Heart right ventricle (tissue), 16 donors: ENCODE measurements at regions of chr17 and their contacts with region 1.

Region 1: GRCh38 chr17:79915850-79916430 is 76.7 kb upstream of the CBX4 start:
- DNase-seq: peak; percentile 33 to 52
- ATAC-seq: peak in 5 of 8 donors; percentile 24 to 54 (median 39)
- H3K4me3 ChIP-seq: no peak overlapping the region
- H3K27ac ChIP-seq: no peak overlapping the region
- H3K4me1 ChIP-seq: peaks cover 0 to 37% (median 14%) of the 10 kb centered on the region in 9 donors
- H3K27me3 ChIP-seq: peaks cover 0 to 48% (median 32%) of the 10 kb centered on the region in 7 donors
- CTCF ChIP-seq: peak in 7 of 9 donors; percentile 32 to 56 (median 52)

Region 2: DNA sequence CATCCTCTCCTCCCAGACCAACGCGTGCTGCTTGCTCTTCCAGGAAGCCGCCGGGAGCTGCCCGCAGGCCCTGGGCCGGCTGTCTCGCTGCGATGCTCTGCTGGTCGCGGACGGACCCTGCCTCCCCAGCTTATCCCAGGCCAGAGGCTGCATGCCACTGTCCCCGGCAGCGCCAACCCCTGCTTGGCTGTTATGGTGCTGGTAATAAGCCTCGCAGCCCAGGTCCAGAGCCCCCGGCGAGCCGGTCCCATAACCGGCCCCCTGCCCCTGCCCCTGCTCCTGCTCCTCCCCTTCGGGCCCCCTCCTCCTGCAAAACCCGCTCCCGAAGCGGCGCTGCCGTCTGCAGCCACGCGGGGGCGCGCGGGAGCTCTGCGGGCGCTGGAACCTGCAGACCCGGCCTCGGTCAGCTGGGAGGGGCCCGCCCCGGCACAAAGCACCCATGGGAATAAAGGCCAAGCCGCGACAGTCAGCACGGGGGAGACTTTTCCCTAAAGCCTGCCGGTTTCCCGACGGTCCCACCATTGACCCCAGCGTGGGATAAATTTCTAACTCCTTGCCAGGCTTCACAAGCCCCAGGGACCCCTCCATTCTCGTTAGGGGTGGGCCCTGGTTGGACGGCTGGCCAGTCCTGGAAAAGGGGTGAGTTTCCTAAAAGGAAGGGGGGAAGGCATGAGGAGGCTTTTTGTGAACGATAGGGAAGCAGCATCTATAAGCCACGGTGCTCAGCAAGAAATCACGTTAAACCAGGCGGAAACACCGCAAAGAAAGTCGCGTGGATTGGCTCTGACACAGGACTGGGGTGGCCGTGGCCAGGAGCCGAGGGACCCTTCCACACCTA is 174.0 kb before region 1 on chr17:
- intact Hi-C with region 1: loop called in 3 of 10 experiments (anchors 5 to 10 kb)
- DNase-seq: peak; percentile 68 to 80
- ATAC-seq: peak; percentile 56 to 76 (median 71)
- H3K4me3 ChIP-seq: peak overlapping the region in 5 of 10 donors; percentile 11 to 31 (median 17)
- H3K27ac ChIP-seq: no peak overlapping the region
- H3K4me1 ChIP-seq: peaks cover 3 to 20% (median 8%) of the 10 kb centered on the region in 9 donors
- H3K27me3 ChIP-seq: peaks cover 20 to 82% (median 72%) of the 10 kb centered on the region in 7 donors
- CTCF ChIP-seq: peak; percentile 90 to 98 (median 95)

Region 3: DNA sequence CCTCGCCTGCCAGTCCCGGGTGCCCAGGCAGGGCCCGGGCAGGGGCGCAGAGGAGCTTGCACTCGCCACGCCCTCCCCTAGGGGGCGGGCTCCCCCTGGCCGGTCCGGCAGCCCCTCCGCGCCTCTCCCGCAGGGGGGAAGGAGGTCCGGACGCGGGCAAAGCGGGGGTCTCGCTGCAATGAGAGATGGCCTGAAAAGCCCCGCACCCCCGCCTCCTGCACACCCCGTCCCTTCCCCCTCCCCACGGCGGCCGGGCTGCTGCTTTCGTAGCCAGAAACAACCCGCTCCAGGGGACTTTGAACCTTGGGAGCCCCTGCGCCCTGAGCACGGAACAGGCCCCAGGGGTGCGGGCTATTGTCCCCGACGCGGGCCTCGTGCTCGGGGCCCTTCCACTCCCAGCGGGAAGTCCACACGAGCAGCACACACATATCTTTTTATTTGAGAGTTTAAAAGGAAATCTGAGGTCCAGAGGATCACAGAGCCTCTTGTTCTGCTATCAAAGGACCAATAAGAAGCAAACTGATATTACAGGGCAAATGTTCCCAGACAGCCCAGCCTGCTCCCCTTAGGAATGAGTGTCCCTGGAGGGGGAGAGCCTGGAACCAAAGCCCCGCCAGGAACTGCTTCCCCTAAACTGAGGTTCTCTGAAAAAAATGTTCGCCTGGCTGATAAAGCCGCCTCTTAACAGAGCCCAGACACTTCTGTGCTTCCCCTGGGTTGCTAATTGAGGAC is 70.9 kb before region 1 on chr17:
- intact Hi-C with region 1: loop called in 3 of 10 experiments (anchors 5 to 10 kb)
- DNase-seq: peak; percentile 46 to 71
- ATAC-seq: peak; percentile 62 to 86 (median 78)
- H3K4me3 ChIP-seq: peak overlapping the region in 9 of 10 donors; percentile 57 to 80 (median 67)
- H3K27ac ChIP-seq: peak overlapping the region in 8 of 10 donors; percentile 44 to 81 (median 70)
- H3K4me1 ChIP-seq: peaks cover 19 to 59% (median 54%) of the 10 kb centered on the region in 9 donors
- H3K27me3 ChIP-seq: peaks cover 20 to 86% (median 34%) of the 10 kb centered on the region in 7 donors
- CTCF ChIP-seq: peak; percentile 70 to 83 (median 79)